CD8-positive, alpha-beta T cell (primary cell): ENCODE measurements at regions of chr12 and their contacts with region 1.

Region 1: GRCh38 chr12:45170456-45171042 is 45.3 kb upstream of the ANO6 start:
- DNase-seq: peak; percentile 53 to 86 (median 75)
- ATAC-seq: peak; percentile 49
- H3K4me3 ChIP-seq: no peak overlapping the region
- H3K4me3 Mint-ChIP-seq: no peak overlapping the region
- H3K27ac ChIP-seq: no peak overlapping the region
- H3K27ac Mint-ChIP-seq: no peak overlapping the region
- H3K4me1 ChIP-seq: no peaks in the 10 kb centered on the region
- H3K4me1 Mint-ChIP-seq: no peaks in the 10 kb centered on the region
- H3K27me3 ChIP-seq: no peaks in the 10 kb centered on the region
- H3K27me3 Mint-ChIP-seq: peaks cover 2% of the 10 kb centered on the region
- CTCF ChIP-seq: peak; percentile 89

Region 2: DNA sequence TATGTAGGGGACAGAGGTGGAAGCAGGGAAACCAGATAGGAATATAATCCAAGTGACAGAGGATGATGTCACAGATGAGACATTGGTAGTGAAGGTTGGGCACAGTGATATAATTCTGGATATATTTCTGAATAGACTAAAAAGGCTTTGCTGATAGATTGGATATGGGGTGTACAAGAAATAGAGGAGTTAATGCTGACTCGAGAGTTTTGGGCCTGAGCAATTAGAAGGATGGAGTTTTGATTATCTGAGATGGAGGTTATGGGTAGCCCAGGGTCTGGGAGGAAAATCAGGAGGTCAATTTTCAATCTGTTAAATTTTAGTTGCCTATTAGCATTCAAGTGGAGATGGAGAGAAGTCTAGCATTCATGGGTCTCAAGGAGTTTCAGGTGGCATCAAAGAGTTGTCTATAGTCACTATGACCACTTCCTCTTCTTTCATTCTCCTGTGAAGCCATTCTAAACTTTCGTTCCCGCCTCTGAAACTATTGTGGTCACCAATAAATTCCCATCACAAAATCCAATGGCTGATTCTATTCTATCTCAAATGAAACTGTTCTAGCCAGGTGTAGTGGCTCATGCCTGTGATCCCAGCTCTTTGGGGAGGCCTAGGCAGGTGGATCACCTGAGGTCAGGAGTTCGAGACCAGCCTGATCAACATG is 34.7 kb after region 1 on chr12:
- CTCF ChIA-PET with region 1: no interaction called
- POLR2A ChIA-PET with region 1: no interaction called
- intact Hi-C with region 1: no loop called
- DNase-seq: no peak
- ATAC-seq: no peak
- H3K4me3 ChIP-seq: no peak overlapping the region
- H3K4me3 Mint-ChIP-seq: no peak overlapping the region
- H3K27ac ChIP-seq: no peak overlapping the region
- H3K27ac Mint-ChIP-seq: no peak overlapping the region
- H3K4me1 ChIP-seq: peaks cover 21% of the 10 kb centered on the region
- H3K4me1 Mint-ChIP-seq: peaks cover 10% of the 10 kb centered on the region
- H3K27me3 ChIP-seq: no peaks in the 10 kb centered on the region
- H3K27me3 Mint-ChIP-seq: no peaks in the 10 kb centered on the region
- CTCF ChIP-seq: no peak

Region 3: GRCh38 chr12:45388545-45388944 is 218.0 kb after region 1 on chr12:
- CTCF ChIA-PET with region 1: interaction called, 7 read pairs
- POLR2A ChIA-PET with region 1: no interaction called
- intact Hi-C with region 1: loop called (anchors 1 to 2 kb)
- DNase-seq: peak in 1 of 9 experiments; percentile 31
- ATAC-seq: no peak
- H3K4me3 ChIP-seq: no peak overlapping the region
- H3K4me3 Mint-ChIP-seq: no peak overlapping the region
- H3K27ac ChIP-seq: no peak overlapping the region
- H3K27ac Mint-ChIP-seq: no peak overlapping the region
- H3K4me1 ChIP-seq: no peaks in the 10 kb centered on the region
- H3K4me1 Mint-ChIP-seq: no peaks in the 10 kb centered on the region
- H3K27me3 ChIP-seq: no peaks in the 10 kb centered on the region
- H3K27me3 Mint-ChIP-seq: no peaks in the 10 kb centered on the region
- CTCF ChIP-seq: no peak

Region 4: GRCh38 chr12:45598761-45599160 is 428.2 kb after region 1 on chr12:
- CTCF ChIA-PET with region 1: no interaction called
- POLR2A ChIA-PET with region 1: no interaction called
- intact Hi-C with region 1: loop called in 1 of 2 experiments (anchors 10 kb)
- DNase-seq: no peak
- ATAC-seq: no peak
- H3K4me3 ChIP-seq: no peak overlapping the region
- H3K4me3 Mint-ChIP-seq: no peak overlapping the region
- H3K27ac ChIP-seq: no peak overlapping the region
- H3K27ac Mint-ChIP-seq: no peak overlapping the region
- H3K4me1 ChIP-seq: no peaks in the 10 kb centered on the region
- H3K4me1 Mint-ChIP-seq: no peaks in the 10 kb centered on the region
- H3K27me3 ChIP-seq: no peaks in the 10 kb centered on the region
- H3K27me3 Mint-ChIP-seq: no peaks in the 10 kb centered on the region
- CTCF ChIP-seq: no peak